Caco-2 (cell line): ENCODE measurements at regions of chr5 and their contacts with region 1.

Region 1: GRCh38 chr5:141618804-141619554 is at the start of gene DIAPH1:
- DNase-seq: peak; percentile 98
- H3K4me3 ChIP-seq: peak within 1 kb of the TSS; percentile 87
- H3K4me3 Mint-ChIP-seq: peak within 1 kb of the TSS; percentile 89
- H3K27ac Mint-ChIP-seq: peak within 1 kb of the TSS; percentile 96
- H3K4me1 ChIP-seq: peaks cover 29% of the 10 kb centered on the region
- H3K4me1 Mint-ChIP-seq: peaks cover 13% of the 10 kb centered on the region
- H3K27me3 ChIP-seq: no peaks in the 10 kb centered on the region
- H3K27me3 Mint-ChIP-seq: no peaks in the 10 kb centered on the region
- CTCF ChIP-seq: peak; percentile 95 to 97
- total RNA-seq, gene DIAPH1: 161 and 167 TPM in 2 replicates

Region 2: DNA sequence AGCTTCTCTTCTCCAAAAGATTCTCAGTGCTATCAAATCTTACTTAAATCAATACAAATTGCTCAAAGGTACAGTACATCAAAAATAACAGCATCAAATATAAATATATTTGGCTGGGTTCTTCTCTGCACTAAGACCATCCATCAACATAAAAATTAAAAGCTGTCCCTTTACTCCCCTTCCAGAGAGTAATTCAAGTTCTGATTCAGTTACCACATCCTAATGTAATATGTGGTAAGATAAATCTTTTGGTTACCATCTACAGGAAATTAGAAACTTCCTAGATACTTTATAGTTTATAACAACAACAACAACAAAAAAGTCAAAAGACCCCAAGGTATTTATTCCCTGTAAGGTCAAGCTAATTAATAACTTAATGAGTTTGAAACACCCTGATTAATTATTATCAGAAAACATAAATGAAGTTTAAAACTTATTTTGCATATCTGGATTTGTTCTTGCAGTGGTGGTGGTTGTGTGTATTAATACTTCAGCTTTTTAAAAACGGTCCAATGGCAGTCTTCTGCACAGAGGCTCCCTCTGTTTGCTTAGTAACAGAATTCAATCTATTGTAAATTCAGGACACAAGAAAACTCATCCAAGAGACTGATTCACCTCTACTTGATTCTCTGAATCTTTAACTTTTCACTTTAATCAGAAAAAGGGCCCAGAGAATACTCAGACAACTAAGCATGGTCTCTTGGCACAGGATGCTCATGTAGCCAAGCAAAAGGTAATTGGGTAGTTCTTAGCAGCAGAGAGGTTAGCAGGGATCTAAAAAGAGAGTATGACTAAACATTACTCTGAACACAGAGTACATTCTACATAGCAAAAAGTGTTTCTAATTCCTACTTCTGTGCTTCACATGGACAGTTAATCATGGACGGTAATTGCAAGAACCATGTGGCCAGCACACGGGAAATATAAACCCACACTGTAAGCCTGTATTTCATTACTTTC is 20.3 kb before region 1 on chr5:
- CTCF ChIA-PET with region 1: interaction called, 11 read pairs
- POLR2A ChIA-PET with region 1: interaction called, 4 read pairs
- intact Hi-C with region 1: no loop called
- DNase-seq: no peak
- H3K4me3 ChIP-seq: no peak overlapping the region
- H3K4me3 Mint-ChIP-seq: no peak overlapping the region
- H3K27ac Mint-ChIP-seq: no peak overlapping the region
- H3K4me1 ChIP-seq: no peaks in the 10 kb centered on the region
- H3K4me1 Mint-ChIP-seq: peaks cover 12% of the 10 kb centered on the region
- H3K27me3 ChIP-seq: no peaks in the 10 kb centered on the region
- H3K27me3 Mint-ChIP-seq: no peaks in the 10 kb centered on the region
- CTCF ChIP-seq: no peak

Region 3: GRCh38 chr5:141603923-141604717 is 14.9 kb before region 1 on chr5:
- CTCF ChIA-PET with region 1: interaction called, 10 read pairs
- POLR2A ChIA-PET with region 1: interaction called, 4 read pairs
- intact Hi-C with region 1: loop called (anchors 1 kb)
- DNase-seq: peak; percentile 74 to 78
- H3K4me3 ChIP-seq: no peak overlapping the region
- H3K4me3 Mint-ChIP-seq: no peak overlapping the region
- H3K27ac Mint-ChIP-seq: peak overlapping the region; percentile 61
- H3K4me1 ChIP-seq: peaks cover 32% of the 10 kb centered on the region
- H3K4me1 Mint-ChIP-seq: peaks cover 32% of the 10 kb centered on the region
- H3K27me3 ChIP-seq: no peaks in the 10 kb centered on the region
- H3K27me3 Mint-ChIP-seq: no peaks in the 10 kb centered on the region
- CTCF ChIP-seq: no peak

Region 4: DNA sequence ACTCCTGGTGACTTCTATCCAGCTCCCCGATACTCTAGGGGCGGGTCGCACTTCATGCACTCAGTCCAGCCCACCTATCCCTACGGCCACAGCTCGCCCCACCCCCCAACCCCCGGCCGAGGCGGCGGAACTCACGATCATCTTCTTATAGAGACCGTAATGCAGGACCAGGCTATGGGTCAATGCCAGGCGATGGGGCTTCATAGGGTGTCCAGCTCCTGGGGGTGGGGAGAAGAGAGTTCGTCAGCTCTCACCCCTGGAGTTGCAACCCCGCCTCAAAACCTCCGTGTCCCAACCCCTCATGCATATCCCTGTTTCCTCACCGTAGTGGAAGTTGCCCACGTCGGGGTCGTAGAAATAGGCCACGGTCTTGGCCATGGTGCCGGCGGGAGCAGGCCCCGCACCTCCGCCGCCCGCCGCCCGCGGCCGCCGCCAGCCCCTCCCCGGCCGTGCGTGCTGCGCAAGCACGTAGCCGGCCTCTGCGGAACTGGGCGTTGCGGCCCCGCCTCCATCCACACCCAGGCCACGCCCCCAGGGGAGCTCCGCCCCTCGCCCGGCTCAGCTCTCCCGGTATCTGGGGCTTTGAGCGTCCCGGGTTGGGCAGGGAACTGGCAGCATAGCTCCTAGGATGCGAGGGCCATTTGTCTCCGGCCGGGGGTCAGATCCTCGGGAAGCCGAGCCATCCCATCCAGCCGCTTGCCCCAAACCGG is 17.6 kb after region 1 on chr5 and contains the starts of genes HDAC3 and RELL2:
- CTCF ChIA-PET with region 1: interaction called, 40 read pairs
- POLR2A ChIA-PET with region 1: interaction called, 23 read pairs
- intact Hi-C with region 1: loop called (anchors 1 kb)
- DNase-seq: peak; percentile 93 to 98
- H3K4me3 ChIP-seq: peak within 1 kb of the TSS; percentile 85
- H3K4me3 Mint-ChIP-seq: peak within 1 kb of the TSS; percentile 90
- H3K27ac Mint-ChIP-seq: peak within 1 kb of the TSS; percentile 72
- H3K4me1 ChIP-seq: peaks cover 10% of the 10 kb centered on the region; the same call in 1 of the 2 replicates
- H3K4me1 Mint-ChIP-seq: peaks cover 9% of the 10 kb centered on the region
- H3K27me3 ChIP-seq: no peaks in the 10 kb centered on the region
- H3K27me3 Mint-ChIP-seq: no peaks in the 10 kb centered on the region
- CTCF ChIP-seq: no peak
- total RNA-seq, gene HDAC3: 73.0 and 74.5 TPM in 2 replicates
- total RNA-seq, gene RELL2: 8.7 and 13.6 TPM in 2 replicates

Region 5: DNA sequence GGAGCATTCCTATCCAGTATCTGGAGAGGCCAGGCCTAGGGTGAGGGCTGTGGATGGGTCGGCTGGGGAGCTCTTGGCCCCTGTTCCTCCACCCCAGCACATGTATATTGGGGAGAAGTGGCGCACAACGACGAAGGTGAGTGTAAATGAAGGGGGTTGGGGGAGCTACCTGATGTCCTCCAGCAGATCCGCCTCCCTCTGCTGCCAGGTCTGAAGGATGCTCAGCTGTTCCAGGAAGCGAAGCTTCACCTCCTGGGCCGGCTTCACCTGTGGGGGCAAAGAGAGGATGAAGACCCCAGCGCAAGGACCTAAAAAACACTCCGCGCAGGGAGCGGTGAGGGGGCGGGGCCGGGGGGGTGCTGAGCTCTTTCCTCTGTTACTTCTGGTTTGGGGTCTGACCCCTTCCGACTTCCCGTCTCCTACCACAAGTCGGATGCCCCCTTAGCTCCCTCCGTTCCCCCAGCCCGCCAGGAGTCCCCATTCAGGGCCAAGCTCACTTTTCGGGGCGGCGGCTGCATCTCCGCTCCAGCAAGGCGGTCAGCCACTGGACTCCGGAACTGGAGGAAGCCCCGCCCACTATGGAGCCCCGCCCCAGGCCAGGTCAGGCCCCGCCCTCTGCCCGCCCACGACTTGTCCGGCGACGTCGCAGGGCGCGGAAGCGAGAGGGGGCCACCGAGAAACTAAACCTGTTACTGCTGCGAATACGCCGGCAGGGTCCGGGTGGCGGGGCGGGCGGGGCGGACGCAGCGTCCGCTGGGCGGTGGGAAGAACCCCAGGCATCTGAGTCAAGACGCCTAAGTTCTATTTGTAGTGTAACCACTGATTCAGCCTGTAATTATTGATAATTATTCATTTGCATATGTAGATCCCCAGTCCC is 32.1 kb after region 1 on chr5 and contains the start of gene FCHSD1:
- CTCF ChIA-PET with region 1: no interaction called
- POLR2A ChIA-PET with region 1: interaction called, 4 read pairs
- intact Hi-C with region 1: loop called (anchors 1 kb)
- DNase-seq: peak; percentile 90 to 93
- H3K4me3 ChIP-seq: peak within 1 kb of the TSS; percentile 75
- H3K4me3 Mint-ChIP-seq: peak within 1 kb of the TSS; percentile 92
- H3K27ac Mint-ChIP-seq: peak within 1 kb of the TSS; percentile 77
- H3K4me1 ChIP-seq: peaks cover 5% of the 10 kb centered on the region
- H3K4me1 Mint-ChIP-seq: peaks cover 22% of the 10 kb centered on the region
- H3K27me3 ChIP-seq: no peaks in the 10 kb centered on the region
- H3K27me3 Mint-ChIP-seq: no peaks in the 10 kb centered on the region
- CTCF ChIP-seq: no peak
- total RNA-seq, gene FCHSD1: 25.0 and 26.8 TPM in 2 replicates